HepG2 (cell line): ENCODE measurements at regions of chr14 and their contacts with region 1.

Region 1: GRCh38 chr14:23646648-23647549 is 10.7 kb downstream of the DHRS2 start:
- DNase-seq: peak; percentile 76
- ATAC-seq: peak; percentile 4
- H3K4me3 ChIP-seq: no peak overlapping the region
- H3K27ac ChIP-seq: peak overlapping the region; percentile 3
- H3K4me1 ChIP-seq: peaks cover 27% of the 10 kb centered on the region
- H3K27me3 ChIP-seq: peaks cover 0 to 18% of the 10 kb centered on the region in 2 experiments; a peak in 1 of 5 replicates
- CTCF ChIP-seq: no peak; the same call in 1 of the 2 replicates
- EP300 ChIP-seq: 0 out of 4 replicates have a peak, but pooled peaks of 1 of the 2 experiments have one; percentile 17
- POLR2A ChIP-seq: peak in 1 of 2 experiments; percentile 97; a peak in 2 of 4 replicates
- RAD21 ChIP-seq: peak; percentile 77

Region 2: GRCh38 chr14:23577004-23577681 is 69.8 kb before region 1 on chr14:
- CTCF ChIA-PET with region 1: no interaction called
- POLR2A ChIA-PET with region 1: interaction called, 924 read pairs
- in situ Hi-C with region 1: no loop called
- intact Hi-C with region 1: no loop called
- DNase-seq: no peak
- ATAC-seq: no peak
- H3K4me3 ChIP-seq: no peak overlapping the region; a peak in 1 of 6 replicates
- H3K27ac ChIP-seq: no peak overlapping the region
- H3K4me1 ChIP-seq: peaks cover 45% of the 10 kb centered on the region
- H3K27me3 ChIP-seq: peaks cover 0 to 2% of the 10 kb centered on the region in 2 experiments; a peak in 2 of 5 replicates
- CTCF ChIP-seq: no peak
- EP300 ChIP-seq: no peak
- POLR2A ChIP-seq: no peak
- RAD21 ChIP-seq: no peak

Region 3: DNA sequence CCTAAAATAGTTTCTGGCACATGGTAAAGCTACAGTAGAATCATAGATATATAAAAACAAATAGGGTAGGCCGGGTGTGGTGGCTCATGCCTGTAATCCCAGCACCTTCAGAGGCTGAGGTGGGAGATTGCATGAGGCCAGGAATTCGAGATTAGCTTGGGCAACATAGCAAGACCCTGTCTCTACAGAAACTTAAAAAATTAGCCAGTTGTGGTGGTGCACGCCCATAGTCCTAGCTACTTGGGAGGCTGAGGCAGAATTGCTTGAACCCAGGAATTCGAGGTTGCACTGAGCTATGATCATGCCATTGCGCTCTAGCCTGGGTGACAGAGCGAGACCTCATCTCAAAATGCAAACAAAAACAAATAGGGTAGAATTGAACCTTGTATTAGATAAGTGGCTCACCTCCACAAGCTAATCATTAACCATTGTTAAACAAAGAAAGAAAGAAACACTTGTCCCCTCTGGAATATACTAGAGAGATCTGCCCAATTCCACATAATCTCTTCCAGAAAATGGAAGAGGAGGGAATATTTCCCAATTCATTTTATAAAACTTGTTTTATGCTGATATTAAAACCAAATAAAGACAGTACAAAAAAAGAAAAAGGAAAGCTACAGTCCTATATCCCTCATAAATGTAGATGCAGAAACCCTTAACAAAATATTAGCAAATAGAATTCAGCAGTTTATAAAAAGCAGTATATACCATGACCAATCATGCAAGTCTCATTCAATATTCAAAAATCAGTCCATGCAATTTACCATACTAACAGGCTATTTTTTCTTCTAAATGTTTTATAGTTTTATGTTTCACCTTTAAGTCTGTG is 33.4 kb before region 1 on chr14:
- CTCF ChIA-PET with region 1: no interaction called
- POLR2A ChIA-PET with region 1: interaction called, 1,105 read pairs
- in situ Hi-C with region 1: no loop called
- intact Hi-C with region 1: no loop called
- DNase-seq: peak; percentile 100
- ATAC-seq: peak; percentile 70
- H3K4me3 ChIP-seq: peak overlapping the region in 2 of 3 experiments; percentile 9 to 26; a peak in 3 of 6 replicates
- H3K27ac ChIP-seq: peak overlapping the region; percentile 89
- H3K4me1 ChIP-seq: peaks cover 95% of the 10 kb centered on the region
- H3K27me3 ChIP-seq: no peaks in the 10 kb centered on the region
- CTCF ChIP-seq: no peak; the same call in 1 of the 2 replicates
- EP300 ChIP-seq: peak; percentile 46 to 95; a peak in 2 of 4 replicates
- POLR2A ChIP-seq: 0 out of 4 replicates have a peak, but pooled peaks have one; percentile 26 to 40
- RAD21 ChIP-seq: no peak; the same call in 1 of the 2 replicates

Region 4: DNA sequence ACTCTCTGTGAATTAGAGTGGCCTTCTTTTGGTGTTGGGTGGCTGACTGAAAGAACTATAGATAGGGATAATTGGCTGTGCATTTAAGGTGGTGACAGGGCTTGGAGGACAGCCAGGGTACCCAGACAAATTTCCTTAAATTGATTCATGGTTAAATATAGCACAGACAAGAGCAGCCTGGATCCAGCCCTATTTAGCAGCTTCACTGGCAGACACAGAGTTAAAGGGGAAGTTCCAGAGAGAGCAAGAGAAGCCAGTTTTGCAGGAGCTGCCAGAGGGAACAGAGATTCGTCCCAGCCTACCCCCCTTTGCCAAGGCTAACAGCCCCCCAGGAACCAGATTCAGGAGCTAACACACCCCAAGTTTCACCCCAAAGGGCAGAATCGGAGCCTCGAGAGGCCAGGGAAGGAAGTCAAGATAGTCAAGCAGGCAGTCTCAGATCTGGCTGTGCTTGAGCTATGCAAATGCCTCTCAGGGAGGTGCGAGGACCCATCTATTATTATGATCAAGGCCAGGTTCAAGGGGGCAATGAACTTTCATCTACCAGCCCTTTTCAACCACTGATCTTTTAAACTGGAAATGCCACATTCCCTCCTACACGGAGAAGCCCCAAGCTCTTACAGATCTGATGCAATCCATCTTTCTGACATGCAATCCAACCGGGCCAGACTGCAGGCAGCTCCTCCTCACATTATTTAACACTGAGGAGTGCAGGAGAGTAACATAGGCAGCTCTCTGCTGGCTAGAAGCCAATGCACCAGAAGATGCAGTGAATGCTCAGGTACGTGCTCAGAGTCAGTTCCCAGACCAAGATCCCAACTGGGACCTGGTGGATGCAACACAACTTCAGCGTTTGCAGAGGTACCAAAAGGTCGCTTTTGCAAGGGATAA is 47.4 kb after region 1 on chr14:
- CTCF ChIA-PET with region 1: no interaction called
- POLR2A ChIA-PET with region 1: interaction called, 33 read pairs
- in situ Hi-C with region 1: no loop called
- intact Hi-C with region 1: no loop called
- DNase-seq: peak; percentile 70
- ATAC-seq: peak; percentile 76
- H3K4me3 ChIP-seq: peak overlapping the region; percentile 14 to 43 (median 25); a peak in 5 of 6 replicates
- H3K27ac ChIP-seq: peak overlapping the region; percentile 37
- H3K4me1 ChIP-seq: peaks cover 65% of the 10 kb centered on the region
- H3K27me3 ChIP-seq: no peaks in the 10 kb centered on the region
- CTCF ChIP-seq: no peak
- EP300 ChIP-seq: peak; percentile 34 to 76; a peak in 3 of 4 replicates
- POLR2A ChIP-seq: no peak
- RAD21 ChIP-seq: no peak

Region 5: GRCh38 chr14:23816371-23816770 is 169.5 kb after region 1 on chr14:
- CTCF ChIA-PET with region 1: no interaction called
- POLR2A ChIA-PET with region 1: no interaction called
- in situ Hi-C with region 1: no loop called
- intact Hi-C with region 1: no loop called
- DNase-seq: no peak
- ATAC-seq: no peak
- H3K4me3 ChIP-seq: no peak overlapping the region
- H3K27ac ChIP-seq: no peak overlapping the region
- H3K4me1 ChIP-seq: no peaks in the 10 kb centered on the region
- H3K27me3 ChIP-seq: no peaks in the 10 kb centered on the region
- CTCF ChIP-seq: no peak
- EP300 ChIP-seq: no peak
- POLR2A ChIP-seq: no peak
- RAD21 ChIP-seq: no peak

Region 6: DNA sequence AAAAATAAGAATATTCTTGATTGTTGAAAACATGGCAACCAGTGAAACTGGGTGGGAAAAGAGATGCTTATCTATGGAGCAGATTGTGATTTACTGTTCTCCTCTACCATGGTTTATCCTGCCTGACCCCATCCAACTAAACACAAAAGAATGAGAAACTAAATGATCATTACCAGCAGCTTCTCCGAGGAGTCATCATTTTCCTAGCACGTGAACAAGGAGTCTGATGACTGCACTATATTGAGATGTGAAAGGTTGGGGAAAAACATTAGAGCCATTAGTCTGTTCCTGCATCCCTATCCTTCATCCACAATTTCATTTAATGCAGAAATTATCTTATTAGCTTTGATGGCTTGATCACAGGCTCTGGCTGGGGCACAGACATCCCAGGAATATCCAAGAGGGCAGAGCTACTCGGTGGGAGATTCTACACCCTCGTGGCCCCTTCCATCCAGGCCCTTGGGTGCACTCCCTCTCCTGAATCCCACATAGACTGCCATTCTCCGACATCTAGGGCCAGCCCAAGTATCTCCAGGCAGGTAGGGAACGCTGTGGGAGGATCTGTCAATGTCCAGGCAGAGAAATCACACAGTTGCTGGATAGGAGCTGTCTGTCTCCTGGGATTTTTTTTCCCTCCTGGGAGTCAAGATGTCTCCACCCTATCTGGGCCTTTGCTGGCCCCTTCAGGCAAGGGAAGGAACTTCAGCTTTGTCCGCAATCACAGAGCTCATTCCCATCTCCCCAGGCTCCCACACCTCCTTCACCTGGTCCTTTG is 263.4 kb after region 1 on chr14:
- CTCF ChIA-PET with region 1: no interaction called
- POLR2A ChIA-PET with region 1: interaction called, 12 read pairs
- in situ Hi-C with region 1: no loop called
- intact Hi-C with region 1: no loop called
- DNase-seq: peak; percentile 81
- ATAC-seq: peak; percentile 96
- H3K4me3 ChIP-seq: no peak overlapping the region
- H3K27ac ChIP-seq: no peak overlapping the region
- H3K4me1 ChIP-seq: no peaks in the 10 kb centered on the region
- H3K27me3 ChIP-seq: peaks cover 0 to 2% of the 10 kb centered on the region in 2 experiments; a peak in 1 of 5 replicates
- CTCF ChIP-seq: peak; percentile 98
- EP300 ChIP-seq: no peak
- POLR2A ChIP-seq: no peak
- RAD21 ChIP-seq: peak; percentile 97

Region 7: DNA sequence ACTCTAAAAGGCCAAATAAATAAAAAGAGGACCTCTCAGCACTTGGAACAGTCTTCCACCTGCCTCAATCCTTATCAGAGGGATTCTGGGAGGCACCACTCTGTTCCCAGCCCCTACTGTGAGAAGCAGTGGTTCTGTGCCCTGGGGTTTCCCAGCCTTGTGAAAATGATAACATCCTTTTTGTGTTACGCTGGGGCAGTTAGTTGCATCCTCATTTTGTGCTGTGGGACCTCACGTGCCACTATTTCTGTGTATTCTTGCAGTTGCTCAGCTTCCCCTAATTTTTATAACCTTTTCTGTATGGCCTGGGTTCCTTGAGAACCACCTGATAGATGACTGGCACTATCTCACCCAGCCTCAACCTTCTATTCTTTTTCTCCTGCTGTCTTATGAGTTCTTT is 872.0 kb after region 1 on chr14:
- CTCF ChIA-PET with region 1: no interaction called
- POLR2A ChIA-PET with region 1: no interaction called
- in situ Hi-C with region 1: no loop called
- intact Hi-C with region 1: no loop called
- DNase-seq: no peak
- ATAC-seq: no peak
- H3K4me3 ChIP-seq: no peak overlapping the region
- H3K27ac ChIP-seq: no peak overlapping the region
- H3K4me1 ChIP-seq: no peaks in the 10 kb centered on the region
- H3K27me3 ChIP-seq: no peaks in the 10 kb centered on the region; a peak in 1 of 5 replicates
- CTCF ChIP-seq: no peak
- EP300 ChIP-seq: no peak
- POLR2A ChIP-seq: no peak
- RAD21 ChIP-seq: no peak